Activated naive CD4-positive, alpha-beta T cell treated with anti-CD3 and anti-CD28 coated beads for 36 hours (primary cell): ENCODE measurements at regions of chr14 and their contacts with region 1.

Region 1: DNA sequence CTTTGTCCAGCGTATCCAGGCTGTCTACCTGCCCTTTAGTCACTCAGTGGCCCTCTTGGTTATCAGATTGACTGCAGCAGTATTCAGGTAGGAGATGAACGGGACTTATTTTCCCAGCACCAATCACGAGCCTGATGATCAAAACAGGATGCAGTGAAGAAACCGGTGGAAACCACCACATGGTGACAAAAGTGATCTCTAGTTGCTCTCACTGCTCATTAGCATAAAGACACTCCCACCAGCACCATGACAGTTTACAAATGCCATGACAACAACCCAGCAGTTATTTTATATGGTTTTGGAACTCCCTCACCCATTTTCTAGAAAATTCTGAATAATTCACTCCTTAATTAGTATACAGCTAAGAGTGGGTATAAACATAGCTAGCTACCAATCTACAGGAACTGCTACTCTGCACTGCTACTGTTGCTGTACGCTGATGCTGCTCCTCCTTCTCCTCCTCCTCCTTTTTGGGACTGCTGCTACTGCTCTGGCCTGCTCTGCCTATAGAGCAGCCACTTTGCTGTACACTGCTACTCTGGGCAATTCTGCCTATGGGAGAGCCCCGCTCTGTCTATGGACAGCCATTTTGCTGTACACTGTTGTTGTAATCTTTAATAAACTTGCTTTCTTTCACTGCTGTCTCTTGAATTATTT is 142.5 kb upstream of the SSTR1 start:
- DNase-seq: peak; percentile 81
- H3K4me3 Mint-ChIP-seq: peak overlapping the region; percentile 70
- H3K27ac Mint-ChIP-seq: peak overlapping the region; percentile 87
- H3K4me1 Mint-ChIP-seq: peaks cover 31% of the 10 kb centered on the region
- H3K27me3 Mint-ChIP-seq: no peaks in the 10 kb centered on the region

Region 2: DNA sequence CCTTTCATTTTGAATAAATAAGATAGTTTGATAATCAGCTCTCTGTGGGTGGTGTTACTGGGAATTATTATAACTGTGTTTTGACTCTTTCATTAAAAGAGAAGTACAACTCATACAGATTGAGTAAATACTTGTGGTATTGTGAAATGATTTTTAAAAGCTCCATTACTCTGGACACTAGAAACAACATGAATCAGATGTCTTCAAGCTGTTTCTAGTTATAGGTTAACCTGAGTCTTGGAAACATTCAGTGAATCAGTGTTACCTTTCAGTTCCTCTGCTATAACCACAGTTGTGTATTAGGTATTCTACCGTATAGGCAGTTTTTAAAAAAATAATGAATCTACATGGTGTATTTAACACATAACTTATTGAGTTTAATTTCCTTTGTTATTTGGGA is 14.0 kb after region 1 on chr14:
- CTCF ChIA-PET with region 1: interaction called, 4 read pairs
- intact Hi-C with region 1: loop called (anchors 1 kb)
- DNase-seq: no peak
- H3K4me3 Mint-ChIP-seq: peak overlapping the region; percentile 9
- H3K27ac Mint-ChIP-seq: no peak overlapping the region
- H3K4me1 Mint-ChIP-seq: peaks cover 55% of the 10 kb centered on the region
- H3K27me3 Mint-ChIP-seq: no peaks in the 10 kb centered on the region

Region 3: GRCh38 chr14:38089123-38089522 is 23.9 kb after region 1 on chr14:
- CTCF ChIA-PET with region 1: no interaction called
- intact Hi-C with region 1: loop called (anchors 1 kb)
- DNase-seq: no peak
- H3K4me3 Mint-ChIP-seq: peak overlapping the region; percentile 43
- H3K27ac Mint-ChIP-seq: no peak overlapping the region
- H3K4me1 Mint-ChIP-seq: peaks cover 35% of the 10 kb centered on the region
- H3K27me3 Mint-ChIP-seq: no peaks in the 10 kb centered on the region

Region 4: GRCh38 chr14:38107216-38107631 is 42.0 kb after region 1 on chr14:
- CTCF ChIA-PET with region 1: no interaction called
- intact Hi-C with region 1: loop called (anchors 1 kb)
- DNase-seq: peak; percentile 29
- H3K4me3 Mint-ChIP-seq: no peak overlapping the region
- H3K27ac Mint-ChIP-seq: no peak overlapping the region
- H3K4me1 Mint-ChIP-seq: peaks cover 21% of the 10 kb centered on the region
- H3K27me3 Mint-ChIP-seq: no peaks in the 10 kb centered on the region

Region 5: DNA sequence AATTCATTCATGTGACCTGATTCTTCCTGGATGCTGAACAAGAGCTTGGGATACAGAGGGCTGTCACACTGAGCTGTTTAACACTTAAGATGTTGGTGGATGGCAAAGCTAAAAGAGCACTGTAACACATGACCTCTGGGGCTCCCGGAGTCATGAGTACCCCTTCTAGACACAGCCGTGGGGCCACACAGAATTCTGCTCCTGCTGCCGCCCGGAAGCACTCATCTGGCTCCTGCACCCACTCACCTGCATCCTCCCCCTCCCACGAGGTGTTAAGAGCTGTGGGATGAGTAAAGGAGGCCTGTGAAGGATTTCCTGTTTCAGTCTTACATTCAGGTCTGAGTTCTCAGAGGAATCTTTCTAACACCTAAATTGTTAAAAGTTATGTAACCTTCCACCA is 64.5 kb after region 1 on chr14:
- CTCF ChIA-PET with region 1: no interaction called
- intact Hi-C with region 1: loop called (anchors 1 kb)
- DNase-seq: peak; percentile 73
- H3K4me3 Mint-ChIP-seq: no peak overlapping the region
- H3K27ac Mint-ChIP-seq: peak overlapping the region; percentile 77
- H3K4me1 Mint-ChIP-seq: peaks cover 35% of the 10 kb centered on the region
- H3K27me3 Mint-ChIP-seq: no peaks in the 10 kb centered on the region

Region 6: DNA sequence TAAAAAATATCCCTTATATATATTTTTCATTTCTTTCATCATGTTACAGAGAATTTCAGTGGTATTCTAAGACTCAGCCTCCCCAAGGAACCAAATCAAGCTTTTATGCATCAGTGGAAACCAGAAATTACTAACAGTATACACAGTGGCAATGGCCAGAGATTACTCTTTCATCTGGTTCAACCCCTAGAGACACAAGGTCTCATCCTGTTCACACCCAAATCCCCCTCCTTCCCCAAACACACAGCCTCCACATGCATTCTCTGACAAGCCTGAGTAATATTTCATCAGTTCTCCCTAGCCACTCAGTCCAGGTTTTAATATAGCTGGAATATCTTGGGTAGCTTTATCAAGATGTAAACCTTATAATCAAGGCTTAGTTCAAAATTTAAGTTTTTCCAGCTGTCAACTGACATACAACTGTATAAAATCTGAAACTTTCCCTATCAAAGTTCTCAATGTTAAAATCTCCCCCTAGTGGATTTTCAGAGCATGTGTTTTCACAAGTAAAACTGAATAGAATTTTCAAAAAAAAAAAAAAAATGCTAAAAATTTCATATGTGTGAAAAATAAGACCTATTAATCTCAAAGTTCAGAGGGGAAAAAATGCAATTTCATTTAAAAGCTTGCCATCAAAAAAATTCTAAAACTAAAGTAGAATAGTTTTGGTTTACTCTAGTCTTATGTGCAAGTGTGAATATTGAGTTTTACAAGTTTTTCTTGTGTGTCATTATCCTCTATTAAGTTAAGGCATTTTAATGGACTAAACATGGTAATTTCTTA is 132.0 kb after region 1 on chr14:
- CTCF ChIA-PET with region 1: no interaction called
- intact Hi-C with region 1: loop called (anchors 5 kb)
- DNase-seq: no peak
- H3K4me3 Mint-ChIP-seq: no peak overlapping the region
- H3K27ac Mint-ChIP-seq: no peak overlapping the region
- H3K4me1 Mint-ChIP-seq: peaks cover 5% of the 10 kb centered on the region
- H3K27me3 Mint-ChIP-seq: no peaks in the 10 kb centered on the region

Region 7: DNA sequence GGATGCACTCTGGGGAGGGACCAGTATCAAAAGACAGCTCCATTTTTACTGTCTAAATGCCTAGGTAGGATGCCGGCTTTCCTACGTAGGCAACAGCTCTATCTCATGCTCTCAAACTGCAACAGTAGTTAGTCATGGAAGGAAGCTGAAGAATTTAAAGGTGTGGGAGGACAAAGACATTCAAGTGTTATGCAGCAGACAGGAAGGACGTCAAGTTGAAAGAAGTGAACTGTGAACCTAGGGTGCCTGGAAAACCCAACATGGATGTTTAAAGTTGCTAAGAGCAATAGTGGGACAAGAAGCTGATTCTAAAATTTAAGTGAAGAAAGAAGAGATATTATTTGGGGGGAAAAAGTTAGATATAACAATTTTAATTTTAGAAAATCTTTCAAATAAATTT is 1031.9 kb after region 1 on chr14:
- CTCF ChIA-PET with region 1: no interaction called
- intact Hi-C with region 1: loop called (anchors 5 kb)
- DNase-seq: peak; percentile 63
- H3K4me3 Mint-ChIP-seq: no peak overlapping the region
- H3K27ac Mint-ChIP-seq: peak overlapping the region; percentile 82
- H3K4me1 Mint-ChIP-seq: peaks cover 46% of the 10 kb centered on the region
- H3K27me3 Mint-ChIP-seq: no peaks in the 10 kb centered on the region